ENCODE measurements at regions of chr2 and their contacts with region 1.

Region 1: DNA sequence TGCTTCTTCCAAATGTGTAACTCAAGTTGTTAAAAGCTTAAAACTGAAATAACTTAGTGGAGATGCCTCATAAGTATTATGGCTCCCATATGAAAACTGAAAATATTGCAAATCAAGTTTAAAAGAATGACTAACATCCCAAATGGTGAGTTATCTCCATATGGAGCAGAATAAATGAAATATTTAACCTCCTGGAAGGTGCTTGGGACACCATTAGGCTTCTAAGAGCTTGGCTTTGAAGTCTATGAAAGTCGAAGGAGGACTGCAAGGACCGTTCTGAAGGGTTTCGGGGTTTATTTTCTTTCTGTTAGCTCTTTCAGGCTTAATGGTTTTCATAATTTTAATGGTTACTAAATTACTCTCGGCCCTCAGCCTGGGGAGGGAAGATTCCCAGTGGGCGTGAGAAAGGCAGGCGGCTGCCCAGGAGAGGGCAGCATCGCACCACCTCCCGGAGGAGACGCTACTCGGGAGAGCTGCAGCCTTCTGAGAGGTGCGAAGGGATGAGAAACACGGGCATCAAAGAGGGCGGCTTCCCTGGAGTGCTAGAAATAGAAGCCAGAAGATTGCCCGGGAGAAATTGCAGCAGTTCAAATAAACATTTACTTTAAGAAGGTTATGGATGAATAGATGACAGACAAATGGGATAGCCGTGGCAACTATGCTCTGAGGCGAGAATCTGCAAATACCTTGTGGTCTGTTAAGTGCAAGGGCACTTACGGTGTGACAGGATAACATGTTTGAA is 43.1 kb downstream of the MAP3K19 start:
- DNase-seq: peak; percentile 77 to 90
- ATAC-seq: peak; percentile 94
- H3K4me3 ChIP-seq: no peak overlapping the region
- H3K27ac ChIP-seq: no peak overlapping the region
- H3K4me1 ChIP-seq: no peaks in the 10 kb centered on the region
- H3K27me3 ChIP-seq: no peaks in the 10 kb centered on the region

Region 2: GRCh38 chr2:135709992-135710391 is 705.8 kb after region 1 on chr2:
- intact Hi-C with region 1: loop called (anchors 5 kb)
- DNase-seq: peak; percentile 65 to 84
- ATAC-seq: peak; percentile 78
- H3K4me3 ChIP-seq: no peak overlapping the region
- H3K27ac ChIP-seq: no peak overlapping the region
- H3K4me1 ChIP-seq: no peaks in the 10 kb centered on the region
- H3K27me3 ChIP-seq: no peaks in the 10 kb centered on the region